HepG2 (cell line): ENCODE measurements at regions of chr10 and their contacts with region 1.

Region 1: GRCh38 chr10:60456053-60456452 is 66.4 kb upstream of the ANK3 start:
- DNase-seq: no peak
- ATAC-seq: no peak
- H3K4me3 ChIP-seq: no peak overlapping the region
- H3K27ac ChIP-seq: no peak overlapping the region
- H3K4me1 ChIP-seq: no peaks in the 10 kb centered on the region
- H3K27me3 ChIP-seq: no peaks in the 10 kb centered on the region; a peak in 2 of 5 replicates
- CTCF ChIP-seq: no peak
- EP300 ChIP-seq: no peak
- POLR2A ChIP-seq: no peak
- RAD21 ChIP-seq: no peak

Region 2: DNA sequence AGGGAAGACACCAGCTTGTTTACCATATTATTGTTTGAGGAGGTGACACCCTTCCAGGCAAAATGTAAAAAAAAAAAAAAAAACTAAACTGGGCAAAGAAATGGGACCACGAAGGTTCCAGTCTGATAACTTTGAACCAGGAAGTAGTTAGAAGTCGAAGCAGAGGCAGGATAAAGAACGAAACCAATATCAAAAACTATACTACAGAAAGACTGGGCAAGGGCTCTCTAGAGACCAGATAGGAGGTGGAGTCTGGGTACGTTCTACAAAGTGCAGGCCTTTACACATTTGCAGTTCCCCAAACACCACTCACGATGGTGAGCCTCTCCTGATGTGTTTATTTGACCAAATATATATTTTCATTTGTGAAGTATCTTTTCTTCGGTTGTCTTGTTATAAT is 196.6 kb after region 1 on chr10:
- CTCF ChIA-PET with region 1: no interaction called
- POLR2A ChIA-PET with region 1: no interaction called
- in situ Hi-C with region 1: loop called (anchors 10 kb)
- intact Hi-C with region 1: no loop called
- DNase-seq: no peak
- ATAC-seq: no peak
- H3K4me3 ChIP-seq: no peak overlapping the region
- H3K27ac ChIP-seq: no peak overlapping the region
- H3K4me1 ChIP-seq: no peaks in the 10 kb centered on the region
- H3K27me3 ChIP-seq: no peaks in the 10 kb centered on the region
- CTCF ChIP-seq: no peak
- EP300 ChIP-seq: no peak
- POLR2A ChIP-seq: no peak
- RAD21 ChIP-seq: no peak

Region 3: DNA sequence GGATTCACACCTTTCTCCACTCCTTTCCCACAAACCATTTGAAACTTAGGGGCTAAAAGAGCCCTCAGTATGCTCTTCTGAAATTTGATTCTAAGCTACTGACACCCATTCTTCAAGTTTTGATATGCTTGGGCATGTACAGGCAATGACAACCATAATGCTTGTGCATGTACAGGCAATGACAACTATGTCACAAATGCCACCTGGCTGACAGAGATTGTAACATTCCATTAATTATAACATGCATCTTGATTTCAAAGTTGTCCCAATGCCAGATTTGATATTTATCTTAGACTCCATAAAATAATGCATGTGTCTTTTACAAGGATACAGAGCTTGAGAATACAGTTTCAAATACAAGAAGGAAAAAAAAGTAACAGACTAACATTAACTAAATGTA is 304.7 kb after region 1 on chr10:
- CTCF ChIA-PET with region 1: no interaction called
- POLR2A ChIA-PET with region 1: no interaction called
- in situ Hi-C with region 1: loop called (anchors 10 kb)
- intact Hi-C with region 1: no loop called
- DNase-seq: no peak
- ATAC-seq: no peak
- H3K4me3 ChIP-seq: no peak overlapping the region
- H3K27ac ChIP-seq: no peak overlapping the region
- H3K4me1 ChIP-seq: no peaks in the 10 kb centered on the region
- H3K27me3 ChIP-seq: 0 out of 5 replicates have a peak, but pooled peaks cover 0 to 4% of the 10 kb centered on the region in 2 experiments
- CTCF ChIP-seq: no peak
- EP300 ChIP-seq: no peak
- POLR2A ChIP-seq: no peak
- RAD21 ChIP-seq: no peak

Region 4: GRCh38 chr10:61903221-61903927 is 1447.3 kb after region 1 on chr10:
- CTCF ChIA-PET with region 1: no interaction called
- POLR2A ChIA-PET with region 1: no interaction called
- in situ Hi-C with region 1: no loop called
- intact Hi-C with region 1: no loop called
- DNase-seq: peak; percentile 38
- ATAC-seq: peak; percentile 89
- H3K4me3 ChIP-seq: peak overlapping the region; percentile 93 to 96 (median 94)
- H3K27ac ChIP-seq: peak overlapping the region; percentile 94
- H3K4me1 ChIP-seq: peaks cover 51% of the 10 kb centered on the region
- H3K27me3 ChIP-seq: no peaks in the 10 kb centered on the region; a peak in 1 of 5 replicates
- CTCF ChIP-seq: peak; percentile 36; the same call in 1 of the 2 replicates
- EP300 ChIP-seq: no peak
- POLR2A ChIP-seq: peak; percentile 39 to 47; a peak in 2 of 4 replicates
- RAD21 ChIP-seq: peak; percentile 45; the same call in 1 of the 2 replicates